ENCODE measurements at regions of chr20 and their contacts with region 1.

Region 1: DNA sequence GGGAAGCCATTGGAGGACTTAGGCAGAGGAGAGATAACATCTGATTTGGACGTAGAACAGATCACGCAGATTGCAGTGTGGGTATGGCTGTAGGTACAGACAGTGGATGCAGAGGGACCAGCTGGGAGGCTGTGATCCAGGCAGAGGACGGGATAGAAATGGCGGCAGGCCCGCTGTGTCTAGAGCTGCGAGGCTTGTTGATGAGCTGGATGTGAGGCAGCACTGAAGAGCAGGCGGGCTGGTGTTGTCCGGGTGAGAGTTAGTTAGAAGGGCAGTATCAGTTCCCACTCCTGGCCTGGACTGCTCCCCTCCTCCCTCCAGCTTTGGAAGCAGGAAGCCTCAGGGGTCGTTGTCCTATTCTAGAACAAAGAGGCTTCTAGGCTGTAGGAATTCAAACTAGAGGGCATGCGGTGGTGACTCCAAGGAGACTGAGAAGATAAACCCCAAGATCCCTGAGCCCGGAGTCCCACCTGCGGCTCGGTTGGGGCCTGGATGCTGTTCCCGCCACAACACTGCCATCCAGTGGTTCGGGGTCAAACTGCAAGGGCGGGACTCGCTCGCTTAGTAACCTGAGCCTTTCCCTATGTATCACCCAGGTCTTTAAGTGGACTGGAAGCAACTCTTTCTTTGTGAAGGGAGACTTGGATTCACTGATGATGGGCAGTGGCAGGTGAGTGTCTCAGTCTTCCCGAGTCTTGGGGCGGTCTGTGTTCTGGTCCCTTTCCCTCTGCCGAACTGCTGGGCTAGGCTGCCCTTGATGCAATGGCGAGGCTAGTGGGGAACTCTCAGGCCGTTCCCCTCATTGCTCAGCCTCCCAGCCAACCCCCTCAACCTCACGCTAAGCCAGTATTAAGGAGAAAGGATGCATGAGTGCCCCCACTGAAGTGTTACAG is 11.2 kb downstream of the TLDC2 start:
- DNase-seq: peak; percentile 82
- H3K4me3 Mint-ChIP-seq: no peak overlapping the region
- H3K27ac Mint-ChIP-seq: no peak overlapping the region
- H3K4me1 Mint-ChIP-seq: peaks cover 7% of the 10 kb centered on the region
- H3K27me3 Mint-ChIP-seq: no peaks in the 10 kb centered on the region
- CTCF ChIP-seq: peak; percentile 98

Region 2: GRCh38 chr20:36259177-36260061 is 627.7 kb before region 1 on chr20:
- CTCF ChIA-PET with region 1: no interaction called
- POLR2A ChIA-PET with region 1: no interaction called
- intact Hi-C with region 1: no loop called
- DNase-seq: no peak
- H3K4me3 Mint-ChIP-seq: no peak overlapping the region
- H3K27ac Mint-ChIP-seq: no peak overlapping the region
- H3K4me1 Mint-ChIP-seq: no peaks in the 10 kb centered on the region
- H3K27me3 Mint-ChIP-seq: no peaks in the 10 kb centered on the region
- CTCF ChIP-seq: no peak

Region 3: GRCh38 chr20:36613974-36614373 is 273.1 kb before region 1 on chr20:
- CTCF ChIA-PET with region 1: interaction called, 14 read pairs
- POLR2A ChIA-PET with region 1: no interaction called
- intact Hi-C with region 1: loop called (anchors 1 kb)
- DNase-seq: peak; percentile 14
- H3K4me3 Mint-ChIP-seq: no peak overlapping the region
- H3K27ac Mint-ChIP-seq: no peak overlapping the region
- H3K4me1 Mint-ChIP-seq: peaks cover 5% of the 10 kb centered on the region
- H3K27me3 Mint-ChIP-seq: no peaks in the 10 kb centered on the region
- CTCF ChIP-seq: no peak

Region 4: GRCh38 chr20:36835453-36836198 is 51.5 kb before region 1 on chr20:
- CTCF ChIA-PET with region 1: interaction called, 15 read pairs
- POLR2A ChIA-PET with region 1: no interaction called
- intact Hi-C with region 1: no loop called
- DNase-seq: peak; percentile 94
- H3K4me3 Mint-ChIP-seq: peak overlapping the region; percentile 65
- H3K27ac Mint-ChIP-seq: peak overlapping the region; percentile 81
- H3K4me1 Mint-ChIP-seq: no peaks in the 10 kb centered on the region
- H3K27me3 Mint-ChIP-seq: no peaks in the 10 kb centered on the region
- CTCF ChIP-seq: no peak

Region 5: DNA sequence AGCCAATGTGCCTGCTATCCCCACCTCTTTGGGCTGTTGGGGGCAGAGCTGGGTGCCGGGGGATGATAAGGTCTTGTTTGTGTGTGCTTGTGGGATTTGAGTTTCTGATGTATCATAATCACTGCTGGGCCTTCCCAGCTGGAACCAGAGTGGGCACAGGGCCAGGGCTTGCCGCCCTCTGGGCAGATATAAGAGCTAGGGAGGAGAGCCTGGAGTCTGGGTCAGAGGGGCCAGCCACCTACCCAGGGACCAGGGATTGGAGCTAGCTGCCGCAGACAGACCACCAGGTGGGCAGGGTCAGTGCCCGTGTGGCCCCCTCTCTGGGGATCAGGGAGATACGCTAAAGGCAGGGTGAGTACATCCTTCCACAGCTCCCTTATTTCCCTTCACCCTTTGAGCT is 14.3 kb before region 1 on chr20:
- CTCF ChIA-PET with region 1: interaction called, 37 read pairs
- POLR2A ChIA-PET with region 1: interaction called, 4 read pairs
- intact Hi-C with region 1: no loop called
- DNase-seq: no peak
- H3K4me3 Mint-ChIP-seq: no peak overlapping the region
- H3K27ac Mint-ChIP-seq: no peak overlapping the region
- H3K4me1 Mint-ChIP-seq: no peaks in the 10 kb centered on the region
- H3K27me3 Mint-ChIP-seq: no peaks in the 10 kb centered on the region
- CTCF ChIP-seq: no peak

Measured in MCF 10A (cell line).